Sigmoid colon (tissue), 7 donors: ENCODE measurements at regions of chr11 and their contacts with region 1.

Region 1: DNA sequence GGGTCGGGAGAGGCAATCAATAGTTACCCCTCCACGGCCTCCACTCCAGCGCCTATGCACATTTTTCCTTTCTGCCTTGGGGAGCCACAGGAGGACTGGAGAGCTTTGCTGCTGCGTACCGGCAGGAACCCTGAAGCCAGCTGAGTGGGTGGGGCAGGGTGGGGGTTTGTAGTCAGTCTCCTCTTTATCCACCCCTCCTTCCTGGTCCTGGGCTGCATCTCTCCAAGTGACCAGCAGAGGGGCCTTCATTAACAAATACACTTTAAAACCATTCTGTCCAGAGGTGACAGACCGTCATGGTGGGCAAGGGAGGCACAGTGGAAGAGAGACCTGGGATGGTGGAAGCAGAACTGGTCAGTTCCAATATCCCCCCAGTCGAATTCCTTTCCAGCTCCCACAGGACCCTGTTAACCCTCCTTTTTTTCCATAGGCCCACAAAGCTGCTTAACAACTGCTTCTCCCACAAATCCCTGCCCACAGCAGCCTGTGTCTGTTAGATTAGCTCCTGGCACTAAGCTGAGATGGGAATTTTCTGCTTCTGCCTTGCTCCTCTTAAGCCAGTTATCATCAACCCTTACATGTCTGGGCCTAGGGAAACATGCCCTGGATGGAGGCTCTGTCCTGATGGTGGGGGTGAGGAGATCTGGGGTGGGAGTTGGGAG is 3.9 kb upstream of the ABCG4 start:
- DNase-seq: no peak
- H3K4me3 ChIP-seq: no peak overlapping the region
- H3K27ac ChIP-seq: no peak overlapping the region
- H3K4me1 ChIP-seq: peaks cover 0 to 21% (median 17%) of the 10 kb centered on the region in 4 donors
- H3K27me3 ChIP-seq: peaks cover 2 to 49% (median 20%) of the 10 kb centered on the region in 3 donors
- CTCF ChIP-seq: peak in 3 of 4 experiments; percentile 54 to 67 (median 54)
- EP300 ChIP-seq: no peak
- POLR2A ChIP-seq: no peak

Region 2: DNA sequence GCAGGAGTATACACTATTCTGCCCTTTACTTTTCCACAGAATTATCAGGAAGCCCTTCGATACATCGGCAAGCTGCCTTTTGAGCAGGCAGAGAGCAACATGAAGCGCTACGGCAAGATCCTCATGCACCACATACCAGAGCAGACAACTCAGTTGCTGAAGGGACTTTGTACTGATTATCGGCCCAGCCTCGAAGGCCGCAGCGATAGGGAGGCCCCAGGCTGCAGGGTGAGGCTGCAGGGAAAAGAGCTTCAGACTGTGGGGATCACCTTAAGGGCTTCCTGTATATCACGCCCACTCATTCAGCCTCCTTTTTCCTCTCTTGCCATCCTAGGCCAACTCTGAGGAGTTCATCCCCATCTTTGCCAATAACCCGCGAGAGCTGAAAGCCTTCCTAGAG is 67.1 kb before region 1 on chr11:
- intact Hi-C with region 1: no loop called
- DNase-seq: no peak
- H3K4me3 ChIP-seq: no peak overlapping the region
- H3K27ac ChIP-seq: no peak overlapping the region
- H3K4me1 ChIP-seq: no peaks in the 10 kb centered on the region
- H3K27me3 ChIP-seq: no peaks in the 10 kb centered on the region
- CTCF ChIP-seq: no peak
- EP300 ChIP-seq: no peak
- POLR2A ChIP-seq: no peak

Region 3: DNA sequence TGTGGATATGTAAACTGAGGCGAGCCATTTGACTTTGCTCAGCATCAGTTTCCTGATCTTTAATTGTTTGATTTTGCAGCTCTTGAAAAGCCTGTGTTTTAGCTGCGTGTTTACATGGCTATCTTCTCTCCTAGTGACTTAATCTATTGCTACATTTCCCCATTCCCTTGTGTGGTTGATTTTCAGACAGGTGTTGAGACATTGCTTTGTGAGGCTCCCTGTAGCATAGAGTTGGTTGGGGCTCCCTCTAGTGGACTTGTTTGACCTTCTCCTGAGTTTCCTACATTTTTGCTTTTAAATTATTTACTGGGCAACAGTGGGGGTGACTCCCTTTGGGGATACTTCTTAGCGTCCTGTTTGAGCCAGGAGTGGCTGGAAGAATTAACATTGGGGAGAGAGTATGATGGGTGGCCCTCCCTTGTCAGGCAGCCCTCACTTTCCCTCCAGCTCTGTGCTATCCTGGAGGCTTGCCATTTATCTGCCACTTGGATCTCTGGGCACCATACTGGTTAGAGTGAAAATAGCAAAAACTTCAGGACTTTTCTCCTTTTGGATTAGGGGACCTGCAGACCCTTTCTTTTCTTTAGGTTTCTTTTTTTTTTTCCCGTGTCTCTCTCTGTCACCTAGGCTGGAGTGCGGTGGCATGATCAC is 52.0 kb after region 1 on chr11:
- intact Hi-C with region 1: loop called (anchors 2 kb)
- DNase-seq: peak; percentile 77
- H3K4me3 ChIP-seq: no peak overlapping the region
- H3K27ac ChIP-seq: no peak overlapping the region
- H3K4me1 ChIP-seq: no peaks in the 10 kb centered on the region
- H3K27me3 ChIP-seq: no peaks in the 10 kb centered on the region
- CTCF ChIP-seq: peak; percentile 55 to 80 (median 72)
- EP300 ChIP-seq: no peak
- POLR2A ChIP-seq: no peak

Region 4: GRCh38 chr11:119493712-119494111 is 348.8 kb after region 1 on chr11:
- intact Hi-C with region 1: no loop called
- DNase-seq: no peak
- H3K4me3 ChIP-seq: no peak overlapping the region
- H3K27ac ChIP-seq: no peak overlapping the region
- H3K4me1 ChIP-seq: no peaks in the 10 kb centered on the region
- H3K27me3 ChIP-seq: peaks cover 0 to 6% (median 0%) of the 10 kb centered on the region in 3 donors
- CTCF ChIP-seq: no peak
- EP300 ChIP-seq: no peak
- POLR2A ChIP-seq: no peak